Esophagus muscularis mucosa (tissue), 4 donors: ENCODE measurements at regions of chr2 and their contacts with region 1.

Region 1: DNA sequence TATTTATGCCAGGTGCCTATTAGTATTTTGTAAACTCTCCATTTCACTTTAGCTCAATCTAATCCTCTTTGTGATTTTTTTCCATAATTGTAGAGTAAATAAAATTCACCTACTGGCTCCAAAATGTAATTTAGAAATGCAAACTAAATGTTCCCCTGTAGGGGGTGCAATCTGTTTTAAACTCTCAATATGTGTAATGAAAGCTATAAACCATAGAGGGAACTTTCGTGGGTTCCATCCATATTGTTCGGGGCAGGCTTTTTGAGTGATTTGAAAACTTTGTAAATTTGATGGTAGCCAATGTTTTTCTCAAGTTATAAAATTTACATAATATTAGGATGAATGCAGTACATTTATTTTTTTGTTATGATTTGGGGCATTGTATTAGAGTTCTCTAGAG is 49.4 kb downstream of the TSPYL6 start:
- DNase-seq: no peak
- H3K4me3 ChIP-seq: no peak overlapping the region
- H3K27ac ChIP-seq: no peak overlapping the region
- H3K4me1 ChIP-seq: peaks cover 17 to 41% (median 33%) of the 10 kb centered on the region in 4 donors
- H3K27me3 ChIP-seq: no peaks in the 10 kb centered on the region
- CTCF ChIP-seq: peak; percentile 67 to 72 (median 70)
- EP300 ChIP-seq: no peak
- POLR2A ChIP-seq: no peak

Region 2: DNA sequence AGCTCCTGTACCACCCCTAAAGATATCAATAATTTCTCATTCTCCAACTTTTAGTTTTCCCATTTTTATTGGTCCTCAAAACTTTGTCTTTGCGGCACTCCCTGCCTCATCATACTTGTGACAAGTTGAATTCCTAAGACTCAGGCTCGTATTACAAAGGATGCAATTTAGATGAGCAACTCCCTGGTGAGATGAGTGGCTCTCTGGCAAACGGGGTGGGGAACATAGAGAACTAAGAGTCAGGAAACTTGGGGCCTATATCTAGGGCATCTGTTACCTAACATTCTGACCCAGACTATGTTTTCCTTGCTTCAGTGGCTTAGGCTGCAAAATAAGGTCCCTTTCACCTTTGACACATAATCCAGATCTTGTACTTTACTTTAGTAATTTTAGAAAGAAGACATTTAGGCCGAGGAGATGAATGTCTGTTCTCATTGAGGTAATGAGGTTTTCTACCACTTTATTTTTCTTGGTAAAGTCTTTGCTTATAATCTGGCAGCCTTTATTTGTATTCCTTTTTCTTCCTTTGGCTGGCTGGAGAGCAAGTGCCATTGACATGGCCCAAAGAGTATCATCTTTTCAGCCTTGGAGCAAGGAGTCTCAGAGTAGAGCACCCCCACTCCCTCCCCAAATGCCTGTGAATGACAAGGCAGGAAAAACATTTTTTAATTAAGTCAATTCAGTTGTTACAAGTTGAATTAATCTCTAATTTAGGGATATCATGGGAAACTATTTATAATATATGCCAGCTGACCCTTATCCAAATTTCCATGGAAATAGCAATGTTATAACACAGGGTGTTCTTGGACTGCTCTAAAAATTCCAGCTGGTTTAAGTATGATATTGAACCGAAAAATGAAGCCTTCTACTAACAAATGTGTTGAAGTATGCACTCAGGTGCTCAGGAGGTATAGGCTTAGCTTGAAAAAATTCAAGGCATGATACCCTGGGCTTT is 34.2 kb after region 1 on chr2:
- intact Hi-C with region 1: no loop called
- DNase-seq: no peak
- H3K4me3 ChIP-seq: no peak overlapping the region
- H3K27ac ChIP-seq: peak overlapping the region; percentile 72 to 80 (median 76)
- H3K4me1 ChIP-seq: peaks cover 15 to 33% (median 31%) of the 10 kb centered on the region in 4 donors
- H3K27me3 ChIP-seq: no peaks in the 10 kb centered on the region
- CTCF ChIP-seq: no peak
- EP300 ChIP-seq: no peak
- POLR2A ChIP-seq: no peak

Region 3: DNA sequence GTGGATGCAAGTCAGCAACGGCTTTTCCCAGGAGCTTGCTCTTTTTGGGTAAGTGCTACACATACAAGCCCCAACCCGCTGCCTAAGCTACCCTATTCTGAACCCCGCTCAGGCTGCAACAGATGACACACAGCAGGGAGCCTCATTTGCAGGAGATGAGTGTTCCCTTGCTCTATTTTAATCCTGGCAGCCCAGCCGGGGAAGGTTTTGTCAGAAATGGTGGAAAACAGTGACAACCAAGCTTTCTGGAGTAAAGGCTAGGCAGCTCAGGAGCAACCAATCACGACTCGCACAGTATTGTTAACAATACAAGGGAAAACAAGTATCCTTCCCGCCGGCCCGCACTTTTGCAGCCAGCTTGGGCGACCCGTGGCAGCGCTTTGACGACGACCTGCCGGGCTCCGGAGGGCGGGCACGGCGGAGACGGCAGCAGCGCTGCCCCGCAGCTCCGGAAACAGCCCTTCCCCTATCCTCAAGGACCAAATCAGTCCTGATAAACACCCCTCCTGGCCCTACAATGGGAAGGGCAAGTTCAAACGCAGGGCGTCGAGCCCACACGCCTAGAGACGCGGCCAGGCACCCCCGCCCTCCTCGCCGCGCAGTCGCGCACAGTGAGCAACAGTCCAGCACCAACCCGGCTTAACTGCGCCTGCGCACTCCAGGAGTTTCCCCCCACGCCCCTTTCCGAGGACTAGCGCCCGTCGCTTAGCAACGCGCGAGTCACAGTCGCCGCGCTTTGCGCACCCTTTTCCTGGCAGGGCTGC is 123.7 kb after region 1 on chr2:
- intact Hi-C with region 1: loop called (anchors 5 kb)
- DNase-seq: peak; percentile 98
- H3K4me3 ChIP-seq: peak overlapping the region; percentile 57 to 75 (median 68)
- H3K27ac ChIP-seq: peak overlapping the region; percentile 83 to 97 (median 92)
- H3K4me1 ChIP-seq: peaks cover 15 to 21% (median 19%) of the 10 kb centered on the region in 4 donors
- H3K27me3 ChIP-seq: no peaks in the 10 kb centered on the region
- CTCF ChIP-seq: no peak
- EP300 ChIP-seq: no peak
- POLR2A ChIP-seq: peak; percentile 83

Region 4: DNA sequence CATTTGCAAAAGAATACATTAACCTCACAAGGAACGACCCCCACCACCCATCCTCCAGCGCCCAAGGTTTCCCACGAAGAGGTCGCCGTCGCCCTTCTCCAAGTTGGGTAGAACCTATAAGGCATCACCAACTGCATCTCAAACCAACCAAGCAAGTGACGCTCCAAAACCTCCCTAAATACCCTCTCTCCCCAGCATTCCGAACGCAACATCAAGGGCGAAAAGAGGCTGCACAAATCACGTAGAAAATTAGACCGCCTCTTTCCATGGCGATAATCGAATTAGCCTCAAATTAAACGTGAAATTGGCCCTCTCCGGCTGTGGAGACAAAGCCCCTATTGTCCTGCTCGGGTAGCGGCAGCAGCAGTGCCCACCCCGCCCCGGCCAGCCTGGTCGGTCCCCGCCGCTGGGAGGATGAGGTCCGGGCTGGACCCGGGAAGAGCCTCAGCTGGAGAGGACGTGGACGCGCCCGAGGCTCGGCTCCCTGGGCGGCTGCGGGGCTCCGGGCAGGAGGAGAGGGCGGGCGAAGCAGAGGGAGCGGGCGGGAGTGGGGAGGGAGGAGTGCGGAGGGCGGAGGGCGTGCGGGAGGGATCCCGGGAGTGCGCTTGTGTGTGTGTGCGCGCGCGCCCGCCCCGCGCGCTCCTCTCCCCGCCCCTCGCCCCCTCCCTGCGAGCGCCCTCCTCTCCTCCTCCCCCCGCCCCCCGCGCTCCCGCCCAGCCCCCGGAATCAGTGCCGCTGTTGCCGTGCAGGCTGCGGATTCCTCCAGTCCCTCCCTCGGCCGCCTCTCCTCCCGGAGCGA is 249.2 kb after region 1 on chr2 and contains the start of gene SPTBN1:
- intact Hi-C with region 1: loop called (anchors 2 kb)
- DNase-seq: peak; percentile 98
- H3K4me3 ChIP-seq: peak within 1 kb of the TSS; percentile 90 to 99 (median 94)
- H3K27ac ChIP-seq: peak within 1 kb of the TSS; percentile 98 to 99 (median 98)
- H3K4me1 ChIP-seq: peaks cover 32 to 44% (median 41%) of the 10 kb centered on the region in 4 donors
- H3K27me3 ChIP-seq: no peaks in the 10 kb centered on the region
- CTCF ChIP-seq: peak in 1 of 3 experiments; percentile 19
- EP300 ChIP-seq: no peak
- POLR2A ChIP-seq: peak; percentile 45
- total RNA-seq, gene SPTBN1: 465 to 600 (median 547) TPM

Region 5: DNA sequence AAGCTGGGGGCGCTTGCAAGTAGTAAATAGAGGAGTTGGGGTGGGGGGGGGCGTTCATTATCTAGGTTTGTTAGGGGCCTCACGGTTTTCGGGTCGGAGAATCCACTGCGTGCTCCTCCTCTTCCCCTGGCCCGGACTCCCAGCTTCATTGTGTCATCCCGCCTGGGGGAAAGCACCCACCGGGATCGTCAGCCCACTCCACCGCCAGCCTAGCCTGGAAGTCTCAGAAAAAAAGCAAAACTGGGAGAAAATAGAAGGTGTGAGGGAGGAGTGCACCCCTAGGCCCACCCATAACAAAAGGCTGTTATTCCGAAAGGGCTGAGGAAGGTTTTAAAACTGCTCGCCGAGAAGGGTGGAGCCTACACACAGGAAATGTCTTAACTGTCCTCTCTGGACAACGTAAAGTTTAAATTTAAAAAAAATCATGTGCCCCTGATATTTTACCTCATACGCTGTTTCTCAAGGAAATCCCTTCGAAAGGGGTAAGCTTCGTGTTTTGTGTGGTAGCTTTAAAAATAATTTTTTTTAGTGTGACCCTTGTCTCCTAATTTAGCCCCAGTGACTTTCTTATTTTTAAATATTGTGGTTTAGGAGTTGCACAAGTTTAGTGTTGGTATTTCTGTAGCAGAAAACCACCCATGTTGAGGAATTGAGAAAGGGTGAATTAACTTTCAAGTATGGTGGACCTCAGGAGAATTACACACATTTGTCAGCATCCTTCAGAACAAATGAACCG is 353.7 kb after region 1 on chr2:
- intact Hi-C with region 1: loop called (anchors 5 kb)
- DNase-seq: no peak
- H3K4me3 ChIP-seq: peak overlapping the region; percentile 54 to 62 (median 57)
- H3K27ac ChIP-seq: peak overlapping the region; percentile 83 to 92 (median 85)
- H3K4me1 ChIP-seq: peaks cover 72 to 91% (median 86%) of the 10 kb centered on the region in 4 donors
- H3K27me3 ChIP-seq: no peaks in the 10 kb centered on the region
- CTCF ChIP-seq: peak in 1 of 3 experiments; percentile 8
- EP300 ChIP-seq: no peak
- POLR2A ChIP-seq: no peak